GM18951 (cell line): ENCODE measurements at regions of chr11 and their contacts with region 1.

Region 1: DNA sequence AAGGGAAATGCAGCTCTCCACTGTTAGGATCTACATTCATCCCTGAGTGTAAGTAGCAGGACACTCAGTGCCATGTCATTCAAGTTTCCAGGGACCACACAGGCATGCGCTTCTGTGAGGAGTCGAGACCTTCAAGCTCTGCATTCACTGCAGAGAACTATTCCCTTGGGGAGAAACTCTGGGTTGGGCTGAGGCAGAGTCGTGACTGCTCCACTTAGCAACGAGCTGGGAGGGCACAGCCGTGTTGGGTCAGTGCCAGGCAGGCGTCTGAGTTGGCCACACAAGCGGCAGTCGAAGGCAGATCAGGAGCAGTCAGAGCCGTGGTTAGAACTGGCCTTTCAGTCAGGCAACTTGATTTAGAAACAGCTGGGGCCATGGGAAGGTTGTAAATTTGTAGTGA is 14.7 kb downstream of the MPEG1 start:
- POLR2A ChIP-seq: no peak

Region 2: GRCh38 chr11:59429924-59430516 is 232.0 kb after region 1 on chr11:
- in situ Hi-C with region 1: loop called (anchors 10 kb)
- POLR2A ChIP-seq: no peak